Cardiac septum (tissue), 1 donor: ENCODE measurements at regions of chr7 and their contacts with region 1.

Region 1: DNA sequence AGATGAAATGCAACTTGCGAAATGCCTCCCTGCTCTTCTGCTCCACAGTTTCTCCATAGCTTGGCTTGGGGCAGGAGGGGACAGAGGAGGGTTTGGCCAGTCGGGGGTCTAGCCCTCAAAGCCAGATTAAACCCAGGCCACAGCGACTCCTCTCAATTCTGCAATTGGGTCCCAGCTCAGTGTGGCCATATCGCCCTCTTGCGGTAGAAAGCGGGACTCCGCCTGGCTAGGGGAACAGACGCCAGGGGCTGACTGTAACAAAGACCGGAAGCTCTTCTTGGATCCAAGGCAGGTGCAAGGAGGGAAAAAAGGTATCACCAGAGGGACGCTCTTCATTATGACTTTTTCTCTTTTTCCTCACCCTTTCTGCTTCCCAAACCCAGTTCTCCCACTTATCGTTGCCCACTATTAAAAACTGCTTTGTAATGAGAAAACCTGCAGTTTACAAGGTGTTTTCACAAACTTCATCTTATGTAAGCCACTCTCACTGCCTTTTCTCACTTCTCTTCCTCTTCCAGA is 36.6 kb upstream of the TNPO3 start:
- DNase-seq: peak; percentile 92

Region 2: GRCh38 chr7:128904381-128905197 is 187.0 kb before region 1 on chr7:
- intact Hi-C with region 1: loop called (anchors 5 kb)
- DNase-seq: no peak

Region 3: GRCh38 chr7:129072479-129073011 is 19.0 kb before region 1 on chr7:
- intact Hi-C with region 1: no loop called
- DNase-seq: no peak